CD4-positive, alpha-beta memory T cell (primary cell): ENCODE measurements at regions of chr15 and their contacts with region 1.

Region 1: GRCh38 chr15:68277603-68278344 is at the start of gene FEM1B:
- DNase-seq: peak; percentile 90 to 94 (median 91)
- H3K4me3 ChIP-seq: peak within 1 kb of the TSS; percentile 79 to 87
- H3K4me3 Mint-ChIP-seq: peak within 1 kb of the TSS; percentile 94 to 99 (median 96)
- H3K27ac ChIP-seq: peak within 1 kb of the TSS; percentile 90
- H3K27ac Mint-ChIP-seq: peak within 1 kb of the TSS; percentile 96 to 98 (median 98)
- H3K4me1 ChIP-seq: peaks cover 53% of the 10 kb centered on the region
- H3K4me1 Mint-ChIP-seq: peaks cover 41 to 60% (median 48%) of the 10 kb centered on the region in 4 donors
- H3K27me3 ChIP-seq: no peaks in the 10 kb centered on the region
- H3K27me3 Mint-ChIP-seq: no peaks in the 10 kb centered on the region
- total RNA-seq, gene FEM1B: 48.3 to 49.1 TPM

Region 2: GRCh38 chr15:68042156-68042854 is 235.5 kb before region 1 on chr15:
- CTCF ChIA-PET with region 1: no interaction called
- POLR2A ChIA-PET with region 1: no interaction called
- intact Hi-C with region 1: no loop called
- DNase-seq: no peak
- H3K4me3 ChIP-seq: no peak overlapping the region
- H3K4me3 Mint-ChIP-seq: no peak overlapping the region
- H3K27ac ChIP-seq: no peak overlapping the region
- H3K27ac Mint-ChIP-seq: no peak overlapping the region
- H3K4me1 ChIP-seq: no peaks in the 10 kb centered on the region
- H3K4me1 Mint-ChIP-seq: no peaks in the 10 kb centered on the region
- H3K27me3 ChIP-seq: no peaks in the 10 kb centered on the region
- H3K27me3 Mint-ChIP-seq: peaks cover 15 to 21% of the 10 kb centered on the region in 2 donors

Region 3: GRCh38 chr15:68053701-68054627 is 223.8 kb before region 1 on chr15 and contains the start of gene PIAS1:
- CTCF ChIA-PET with region 1: interaction called, 3 read pairs
- POLR2A ChIA-PET with region 1: interaction called, 12 read pairs
- intact Hi-C with region 1: loop called (anchors 1 kb)
- DNase-seq: peak; percentile 91 to 94 (median 92)
- H3K4me3 ChIP-seq: peak within 1 kb of the TSS; percentile 80 to 97
- H3K4me3 Mint-ChIP-seq: peak within 1 kb of the TSS; percentile 91 to 96 (median 94)
- H3K27ac ChIP-seq: peak within 1 kb of the TSS; percentile 91
- H3K27ac Mint-ChIP-seq: peak within 1 kb of the TSS; percentile 83 to 96 (median 94)
- H3K4me1 ChIP-seq: peaks cover 38% of the 10 kb centered on the region
- H3K4me1 Mint-ChIP-seq: peaks cover 26 to 44% (median 34%) of the 10 kb centered on the region in 4 donors
- H3K27me3 ChIP-seq: no peaks in the 10 kb centered on the region
- H3K27me3 Mint-ChIP-seq: peaks cover 0 to 1% of the 10 kb centered on the region in 2 donors
- total RNA-seq, gene PIAS1: 86.0 to 86.2 TPM

Region 4: GRCh38 chr15:68177742-68178141 is 100.0 kb before region 1 on chr15:
- CTCF ChIA-PET with region 1: no interaction called
- POLR2A ChIA-PET with region 1: no interaction called
- intact Hi-C with region 1: no loop called
- DNase-seq: no peak
- H3K4me3 ChIP-seq: no peak overlapping the region
- H3K4me3 Mint-ChIP-seq: no peak overlapping the region
- H3K27ac ChIP-seq: no peak overlapping the region
- H3K27ac Mint-ChIP-seq: peak overlapping the region in 4 of 7 donors; percentile 12 to 58 (median 26)
- H3K4me1 ChIP-seq: no peaks in the 10 kb centered on the region
- H3K4me1 Mint-ChIP-seq: peaks cover 0 to 5% (median under 1%) of the 10 kb centered on the region in 4 donors
- H3K27me3 ChIP-seq: no peaks in the 10 kb centered on the region
- H3K27me3 Mint-ChIP-seq: no peaks in the 10 kb centered on the region

Region 5: DNA sequence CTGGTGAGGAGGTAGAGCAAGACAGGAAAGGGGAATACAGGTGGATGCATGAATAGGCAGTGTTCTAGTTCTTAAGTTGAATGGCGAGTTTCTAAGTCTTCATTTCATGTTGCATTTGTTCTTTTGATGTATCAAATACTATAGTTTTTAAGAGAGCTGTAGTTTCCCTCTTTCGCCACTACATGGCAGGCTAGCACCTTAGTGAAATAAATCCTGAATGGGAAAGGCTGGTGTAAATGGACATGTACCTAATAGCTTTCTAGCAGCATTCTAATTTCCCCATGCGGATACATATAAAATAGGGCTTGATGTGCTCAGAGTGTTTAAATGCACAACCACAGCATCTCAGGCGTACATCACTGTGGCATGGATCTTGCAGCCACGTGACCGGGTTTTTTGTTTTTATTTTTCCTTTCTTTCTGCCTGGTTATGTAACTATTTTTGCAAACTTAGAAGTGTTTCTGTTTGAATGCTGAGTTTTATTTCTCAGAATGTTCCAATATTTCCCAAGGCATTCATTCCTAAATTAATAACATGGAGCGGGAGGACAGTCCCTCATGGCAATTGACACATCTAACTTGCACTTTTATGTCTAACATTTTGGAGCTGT is 24.7 kb before region 1 on chr15:
- CTCF ChIA-PET with region 1: interaction called, 13 read pairs
- POLR2A ChIA-PET with region 1: interaction called, 60 read pairs
- intact Hi-C with region 1: loop called (anchors 1 kb)
- DNase-seq: peak; percentile 48 to 57 (median 55)
- H3K4me3 ChIP-seq: no peak overlapping the region
- H3K4me3 Mint-ChIP-seq: no peak overlapping the region
- H3K27ac ChIP-seq: no peak overlapping the region
- H3K27ac Mint-ChIP-seq: peak overlapping the region in 1 of 7 donors; percentile 29
- H3K4me1 ChIP-seq: peaks cover 5% of the 10 kb centered on the region
- H3K4me1 Mint-ChIP-seq: peaks cover 0 to 4% (median under 1%) of the 10 kb centered on the region in 4 donors
- H3K27me3 ChIP-seq: no peaks in the 10 kb centered on the region
- H3K27me3 Mint-ChIP-seq: peaks cover 0 to 3% of the 10 kb centered on the region in 2 donors

Region 6: DNA sequence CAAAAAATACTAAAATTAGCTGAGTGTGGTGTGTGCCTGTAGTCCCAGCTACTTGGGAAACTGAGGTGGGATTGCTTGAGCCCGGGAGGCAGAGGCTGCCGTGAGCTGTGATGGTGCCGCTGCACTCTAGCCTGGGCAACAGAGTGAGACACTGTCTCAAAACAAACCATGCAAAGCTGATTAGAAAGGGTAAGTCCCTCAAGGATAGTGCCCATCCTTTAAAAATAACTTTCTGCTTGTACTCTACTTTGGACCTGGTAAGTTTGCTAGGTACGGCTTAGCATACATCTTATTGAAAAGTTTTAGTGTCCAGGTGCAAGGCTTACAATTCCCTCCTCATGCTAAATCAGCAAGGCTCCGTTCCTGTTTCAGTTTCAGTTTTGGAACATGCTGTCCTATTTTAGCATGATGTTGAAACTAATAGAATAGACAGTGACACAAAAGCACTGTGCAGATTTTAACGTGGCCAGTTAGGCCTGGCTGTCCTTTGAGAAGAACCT is 21.2 kb after region 1 on chr15:
- CTCF ChIA-PET with region 1: interaction called, 10 read pairs
- POLR2A ChIA-PET with region 1: interaction called, 26 read pairs
- intact Hi-C with region 1: loop called (anchors 1 kb)
- DNase-seq: peak in 4 of 5 donors; percentile 39 to 46 (median 42)
- H3K4me3 ChIP-seq: peak overlapping the region; percentile 43 to 46
- H3K4me3 Mint-ChIP-seq: peak overlapping the region; percentile 77 to 91 (median 84)
- H3K27ac ChIP-seq: peak overlapping the region; percentile 47
- H3K27ac Mint-ChIP-seq: peak overlapping the region; percentile 62 to 95 (median 91)
- H3K4me1 ChIP-seq: peaks cover 17% of the 10 kb centered on the region
- H3K4me1 Mint-ChIP-seq: peaks cover 15 to 40% (median 26%) of the 10 kb centered on the region in 4 donors
- H3K27me3 ChIP-seq: no peaks in the 10 kb centered on the region
- H3K27me3 Mint-ChIP-seq: no peaks in the 10 kb centered on the region

Region 7: GRCh38 chr15:69413822-69414700 is 1136.3 kb after region 1 on chr15 and contains the start of gene KIF23:
- CTCF ChIA-PET with region 1: no interaction called
- POLR2A ChIA-PET with region 1: no interaction called
- intact Hi-C with region 1: loop called (anchors 5 kb)
- DNase-seq: peak; percentile 90 to 95 (median 91)
- H3K4me3 ChIP-seq: peak within 1 kb of the TSS in 1 of 2 donors; percentile 58
- H3K4me3 Mint-ChIP-seq: peak within 1 kb of the TSS; percentile 85 to 93 (median 86)
- H3K27ac ChIP-seq: peak within 1 kb of the TSS; percentile 37
- H3K27ac Mint-ChIP-seq: peak within 1 kb of the TSS; percentile 48 to 91 (median 74)
- H3K4me1 ChIP-seq: peaks cover 8% of the 10 kb centered on the region
- H3K4me1 Mint-ChIP-seq: peaks cover 6 to 15% (median 12%) of the 10 kb centered on the region in 4 donors
- H3K27me3 ChIP-seq: no peaks in the 10 kb centered on the region
- H3K27me3 Mint-ChIP-seq: peaks cover 5 to 17% of the 10 kb centered on the region in 2 donors
- total RNA-seq, gene KIF23: 0.20 TPM in 1 of 2 experiments, not detected in the other